ENCODE measurements at regions of chr10 and their contacts with region 1.

Region 1: GRCh38 chr10:99958302-99958701 is 51.4 kb downstream of the DNMBP start:
- DNase-seq: no peak
- ATAC-seq: no peak
- H3K4me3 ChIP-seq: no peak overlapping the region
- H3K27ac ChIP-seq: no peak overlapping the region
- H3K4me1 ChIP-seq: no peaks in the 10 kb centered on the region
- H3K27me3 ChIP-seq: no peaks in the 10 kb centered on the region
- CTCF ChIP-seq: no peak
- POLR2A ChIP-seq: no peak

Region 2: DNA sequence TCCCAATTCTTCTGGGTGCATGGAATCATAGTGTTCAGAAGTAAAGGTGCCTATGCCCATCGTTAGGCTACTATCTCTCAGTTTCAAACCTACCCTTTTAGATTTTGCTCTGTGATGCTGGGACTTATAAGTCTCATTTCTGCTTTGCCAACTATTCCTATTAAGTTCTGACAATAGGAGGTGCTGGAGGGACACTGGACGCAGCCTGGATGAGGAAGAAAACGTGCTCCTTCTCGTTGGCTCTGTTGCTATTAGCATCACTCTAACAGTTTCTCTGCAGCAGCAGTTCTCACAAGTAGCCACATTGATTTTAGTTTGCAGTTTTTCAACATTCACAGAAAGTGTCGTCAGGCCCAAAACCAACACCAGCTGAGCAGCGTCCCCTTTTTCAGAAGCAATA is 103.4 kb before region 1 on chr10:
- intact Hi-C with region 1: loop called (anchors 10 kb)
- DNase-seq: peak in 2 of 4 donors; percentile 15 to 22
- ATAC-seq: no peak
- H3K4me3 ChIP-seq: no peak overlapping the region
- H3K27ac ChIP-seq: no peak overlapping the region
- H3K4me1 ChIP-seq: no peaks in the 10 kb centered on the region
- H3K27me3 ChIP-seq: no peaks in the 10 kb centered on the region
- CTCF ChIP-seq: peak in 4 of 7 experiments; percentile 8 to 36 (median 30)
- POLR2A ChIP-seq: no peak